Posterior cingulate gyrus (tissue), 11 donors: ENCODE measurements at regions of chr2 and their contacts with region 1.

Region 1: DNA sequence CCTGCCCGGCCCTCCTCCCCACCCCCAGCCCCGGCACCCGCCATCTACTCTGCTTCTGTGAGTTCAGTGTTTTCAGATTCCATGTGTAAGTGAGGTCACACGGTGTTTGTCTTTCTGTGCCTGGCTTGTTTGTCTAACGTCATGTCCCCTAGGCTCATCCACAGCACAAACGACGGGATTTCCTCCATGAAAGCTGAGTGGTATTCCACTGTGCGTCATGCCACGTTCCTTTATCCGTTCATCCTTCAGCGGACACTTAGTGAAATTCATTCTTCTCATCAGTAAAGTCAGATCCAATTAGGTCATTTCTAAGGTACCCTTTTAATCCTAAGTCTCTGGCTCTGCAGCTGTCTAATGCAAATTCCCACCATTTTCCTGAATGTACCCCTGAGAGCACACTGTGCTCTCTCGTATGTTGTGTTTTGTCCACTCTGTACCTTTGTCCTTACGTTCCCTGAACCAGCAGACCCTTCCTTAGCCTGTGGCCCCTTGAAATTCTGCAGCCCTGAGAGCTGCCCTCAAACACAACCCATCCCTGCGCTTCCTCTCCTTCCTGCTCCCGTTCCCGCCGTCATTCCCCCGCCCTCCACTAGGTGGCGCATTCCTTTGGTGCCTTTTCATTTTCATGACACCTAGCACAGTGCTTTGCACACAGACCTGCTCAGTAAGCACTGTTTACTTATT is 44.1 kb downstream of the TRAPPC12 start:
- DNase-seq: peak in 5 of 10 donors; percentile 65 to 93 (median 73)

Region 2: GRCh38 chr2:3523551-3524041 is 100.0 kb after region 1 on chr2:
- intact Hi-C with region 1: no loop called
- DNase-seq: no peak

Region 3: GRCh38 chr2:3651691-3652648 is 228.3 kb after region 1 on chr2:
- intact Hi-C with region 1: loop called (anchors 5 kb)
- DNase-seq: peak; percentile 50 to 97 (median 82)

Region 4: GRCh38 chr2:3805201-3805939 is 381.7 kb after region 1 on chr2:
- intact Hi-C with region 1: no loop called
- DNase-seq: peak in 2 of 10 donors; percentile 31 to 33